ENCODE measurements at regions of chr22 and their contacts with region 1.

Region 1: DNA sequence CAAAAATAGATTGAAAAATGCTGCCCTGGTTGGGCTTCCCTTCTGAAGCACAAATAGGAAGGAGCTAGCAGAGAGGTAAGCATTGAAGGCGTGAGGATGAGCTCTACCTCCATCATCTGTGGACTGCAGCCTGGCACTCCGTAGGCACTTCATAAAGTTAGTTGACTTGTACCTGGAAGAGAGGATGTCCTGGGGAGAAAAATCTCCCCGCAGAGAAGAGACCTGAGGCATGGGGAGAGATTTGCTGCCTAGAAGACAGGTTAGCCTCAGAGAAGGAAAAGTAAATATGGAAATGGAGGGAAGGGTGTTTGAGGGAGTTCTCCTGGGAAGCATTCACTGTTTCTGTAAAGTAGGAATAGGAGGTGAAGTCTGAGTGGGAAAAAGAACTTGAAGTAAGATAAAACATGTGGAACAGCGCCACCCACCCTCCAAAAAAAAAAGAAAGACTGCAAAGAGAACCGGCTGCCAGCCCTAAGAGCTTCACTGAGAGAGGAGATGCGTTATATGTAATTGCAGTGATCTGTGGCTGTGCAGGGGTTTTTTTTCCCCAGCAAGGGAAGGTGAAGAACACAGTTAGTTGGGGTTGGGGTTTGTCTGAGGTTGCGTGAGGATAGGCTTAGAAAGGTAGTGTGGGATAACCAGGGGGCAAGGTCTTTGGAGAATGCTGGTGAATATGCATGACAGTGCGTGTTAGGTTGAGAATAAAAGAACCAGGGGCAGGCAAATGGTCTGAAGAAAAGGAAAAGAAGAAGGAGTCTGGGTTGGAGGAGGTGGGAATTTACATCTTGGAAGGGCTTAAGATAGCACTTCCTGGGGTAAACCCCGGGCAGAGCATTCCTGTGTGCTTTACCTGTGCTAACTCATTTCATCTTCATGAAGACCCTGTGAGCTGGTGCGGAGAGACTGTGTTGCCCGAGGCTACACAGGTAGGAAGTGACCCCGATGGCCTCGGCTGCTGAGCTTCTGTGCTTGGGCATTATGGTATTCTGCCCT is 16.0 kb downstream of the TNRC6B start:
- DNase-seq: no peak
- H3K4me3 ChIP-seq: no peak overlapping the region
- H3K27ac ChIP-seq: no peak overlapping the region
- H3K4me1 ChIP-seq: peaks cover 15% of the 10 kb centered on the region
- CTCF ChIP-seq: peak; percentile 80

Region 2: DNA sequence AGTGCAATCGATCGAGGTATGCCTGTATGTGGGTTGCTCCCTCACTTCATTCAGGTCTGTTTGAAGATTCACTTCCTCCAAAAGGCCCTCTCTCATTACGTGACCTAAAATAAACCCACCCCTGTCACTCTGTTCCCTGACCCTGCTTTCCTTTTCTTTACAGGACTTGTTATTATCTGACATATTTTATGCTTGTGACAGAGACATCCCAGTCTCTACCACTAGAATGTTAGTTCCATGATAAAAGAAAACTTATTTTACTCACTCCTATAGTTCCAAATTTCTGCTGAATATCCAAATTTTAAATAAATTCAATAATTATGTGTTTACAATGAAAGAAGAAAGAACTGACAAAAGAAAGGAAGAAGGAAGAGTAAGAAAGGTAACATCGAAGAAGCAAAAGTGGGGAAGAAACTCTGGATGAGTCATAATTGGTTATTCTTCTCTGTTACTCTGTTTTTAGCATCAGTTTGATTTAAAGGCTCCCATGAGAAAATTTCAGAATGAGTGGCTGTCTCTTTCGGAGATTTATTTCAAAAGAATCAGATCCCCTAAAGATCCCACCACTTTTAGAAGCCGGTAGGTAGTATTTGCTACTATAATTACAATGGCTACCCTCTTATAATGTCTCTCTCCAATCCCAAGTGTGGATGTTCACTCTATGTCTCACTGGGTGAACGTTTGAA is 333.7 kb before region 1 on chr22:
- CTCF ChIA-PET with region 1: no interaction called
- POLR2A ChIA-PET with region 1: no interaction called
- intact Hi-C with region 1: no loop called
- DNase-seq: no peak
- H3K4me3 ChIP-seq: no peak overlapping the region
- H3K27ac ChIP-seq: no peak overlapping the region
- H3K4me1 ChIP-seq: no peaks in the 10 kb centered on the region
- CTCF ChIP-seq: no peak

Region 3: GRCh38 chr22:40147388-40148176 is 46.1 kb before region 1 on chr22:
- CTCF ChIA-PET with region 1: no interaction called
- POLR2A ChIA-PET with region 1: interaction called, 10 read pairs
- intact Hi-C with region 1: no loop called
- DNase-seq: no peak
- H3K4me3 ChIP-seq: no peak overlapping the region
- H3K27ac ChIP-seq: no peak overlapping the region
- H3K4me1 ChIP-seq: no peaks in the 10 kb centered on the region
- CTCF ChIP-seq: no peak